ENCODE measurements at regions of chr2 and their contacts with region 1.

Region 1: GRCh38 chr2:219498280-219499057 is at the start of gene GMPPA:
- DNase-seq: peak; percentile 98 to 99
- H3K4me3 ChIP-seq: peak within 1 kb of the TSS; percentile 86
- H3K4me3 Mint-ChIP-seq: peak within 1 kb of the TSS; percentile 98
- H3K27ac Mint-ChIP-seq: peak within 1 kb of the TSS; percentile 94
- H3K4me1 ChIP-seq: peaks cover 14% of the 10 kb centered on the region; the same call in 1 of the 2 replicates
- H3K4me1 Mint-ChIP-seq: peaks cover 16% of the 10 kb centered on the region
- H3K27me3 ChIP-seq: no peaks in the 10 kb centered on the region
- H3K27me3 Mint-ChIP-seq: peaks cover under 1% of the 10 kb centered on the region
- CTCF ChIP-seq: no peak
- total RNA-seq, gene GMPPA: 51.0 and 53.7 TPM in 2 replicates

Region 2: DNA sequence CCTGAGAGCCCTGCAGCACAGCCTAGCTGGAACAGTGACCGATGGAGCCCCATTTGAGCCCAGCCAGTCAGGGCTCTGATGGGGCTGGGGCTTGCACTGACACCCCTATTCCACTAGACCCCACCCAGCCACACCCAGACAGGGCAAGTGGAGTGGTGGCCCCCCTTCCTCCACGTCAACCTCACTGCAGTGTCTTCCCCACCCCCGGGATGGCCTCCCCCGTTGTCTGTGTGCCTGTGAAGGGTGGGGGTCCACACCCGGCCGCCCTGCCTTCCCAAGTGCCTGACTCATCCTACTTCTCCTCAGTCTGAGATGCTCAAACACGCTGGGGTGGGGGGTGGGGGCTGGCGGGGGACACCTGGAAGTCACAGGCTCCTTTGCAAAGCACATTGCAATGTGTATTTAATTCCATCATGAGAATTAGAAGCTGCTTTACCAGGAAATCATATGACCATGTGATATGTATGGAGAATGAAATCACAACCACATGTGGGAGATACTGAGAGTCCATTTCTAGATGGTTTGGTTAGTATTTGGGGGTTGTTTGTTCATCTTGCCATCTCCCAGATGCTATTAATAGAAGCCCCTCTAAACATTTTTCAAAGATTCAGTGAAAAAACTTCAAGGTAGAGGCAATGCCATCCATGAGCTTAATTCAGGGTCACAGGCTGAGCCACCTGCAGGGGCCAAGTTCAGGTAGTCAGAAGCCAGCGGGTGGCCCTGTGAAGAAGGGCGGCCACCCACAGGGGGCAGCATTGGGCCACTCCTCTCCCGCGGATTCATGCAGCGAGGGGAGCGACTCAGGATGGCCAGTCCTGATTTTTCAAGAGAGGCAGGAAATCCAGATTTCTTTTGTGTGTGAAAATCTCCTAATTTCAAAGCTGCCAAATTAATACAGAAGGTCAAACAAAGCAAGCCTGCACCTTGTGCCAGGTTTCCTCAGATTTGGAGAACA is 22.5 kb before region 1 on chr2:
- CTCF ChIA-PET with region 1: interaction called, 15 read pairs
- POLR2A ChIA-PET with region 1: interaction called, 3 read pairs
- intact Hi-C with region 1: no loop called
- DNase-seq: peak; percentile 74 to 87
- H3K4me3 ChIP-seq: no peak overlapping the region
- H3K4me3 Mint-ChIP-seq: peak overlapping the region; percentile 10
- H3K27ac Mint-ChIP-seq: no peak overlapping the region
- H3K4me1 ChIP-seq: no peaks in the 10 kb centered on the region
- H3K4me1 Mint-ChIP-seq: no peaks in the 10 kb centered on the region
- H3K27me3 ChIP-seq: no peaks in the 10 kb centered on the region
- H3K27me3 Mint-ChIP-seq: no peaks in the 10 kb centered on the region
- CTCF ChIP-seq: peak; percentile 91 to 94

Region 3: DNA sequence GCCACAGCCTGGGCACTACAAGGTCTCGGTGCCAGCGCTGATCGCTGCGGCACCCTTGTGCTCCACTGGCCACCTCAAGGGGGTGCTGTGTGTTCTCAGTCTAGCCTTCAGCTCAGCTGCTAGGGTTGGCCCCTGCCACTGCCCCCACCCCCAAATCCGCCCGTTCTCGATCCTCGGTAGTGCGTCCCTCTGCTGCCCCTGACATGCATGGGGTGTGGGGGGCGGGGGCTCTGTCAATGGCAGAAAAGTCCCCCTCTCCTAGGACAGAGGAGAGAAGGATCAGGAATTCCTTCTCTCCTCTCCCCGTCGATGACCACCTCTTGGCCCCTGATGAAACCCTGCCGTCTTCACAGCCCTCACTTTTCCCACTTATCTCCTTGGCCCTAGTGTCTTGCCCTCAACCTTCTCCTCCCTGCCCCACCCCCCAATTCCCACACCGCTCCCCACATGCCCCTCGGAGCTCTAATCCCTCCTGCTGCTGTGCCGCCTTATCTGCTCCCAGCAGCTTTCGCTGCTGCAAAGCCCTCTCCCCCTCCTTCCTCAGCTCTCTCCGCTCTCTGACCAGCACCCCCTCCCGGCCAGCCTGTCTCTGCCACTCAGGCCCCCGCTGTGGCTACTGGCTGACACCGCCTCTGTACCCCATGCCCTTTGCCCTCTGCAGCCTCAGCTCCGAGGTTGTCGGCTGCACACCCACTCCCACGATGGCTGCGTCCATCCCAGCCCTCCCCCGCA is 11.5 kb after region 1 on chr2:
- CTCF ChIA-PET with region 1: interaction called, 126 read pairs
- POLR2A ChIA-PET with region 1: interaction called, 10 read pairs
- intact Hi-C with region 1: loop called (anchors 1 kb)
- DNase-seq: peak; percentile 80 to 81
- H3K4me3 ChIP-seq: peak overlapping the region; percentile 64
- H3K4me3 Mint-ChIP-seq: peak overlapping the region; percentile 80
- H3K27ac Mint-ChIP-seq: no peak overlapping the region
- H3K4me1 ChIP-seq: peaks cover 12% of the 10 kb centered on the region
- H3K4me1 Mint-ChIP-seq: peaks cover 18% of the 10 kb centered on the region
- H3K27me3 ChIP-seq: peaks cover 5% of the 10 kb centered on the region; the same call in 1 of the 2 replicates
- H3K27me3 Mint-ChIP-seq: peaks cover 20% of the 10 kb centered on the region
- CTCF ChIP-seq: peak; percentile 68 to 90

Region 4: DNA sequence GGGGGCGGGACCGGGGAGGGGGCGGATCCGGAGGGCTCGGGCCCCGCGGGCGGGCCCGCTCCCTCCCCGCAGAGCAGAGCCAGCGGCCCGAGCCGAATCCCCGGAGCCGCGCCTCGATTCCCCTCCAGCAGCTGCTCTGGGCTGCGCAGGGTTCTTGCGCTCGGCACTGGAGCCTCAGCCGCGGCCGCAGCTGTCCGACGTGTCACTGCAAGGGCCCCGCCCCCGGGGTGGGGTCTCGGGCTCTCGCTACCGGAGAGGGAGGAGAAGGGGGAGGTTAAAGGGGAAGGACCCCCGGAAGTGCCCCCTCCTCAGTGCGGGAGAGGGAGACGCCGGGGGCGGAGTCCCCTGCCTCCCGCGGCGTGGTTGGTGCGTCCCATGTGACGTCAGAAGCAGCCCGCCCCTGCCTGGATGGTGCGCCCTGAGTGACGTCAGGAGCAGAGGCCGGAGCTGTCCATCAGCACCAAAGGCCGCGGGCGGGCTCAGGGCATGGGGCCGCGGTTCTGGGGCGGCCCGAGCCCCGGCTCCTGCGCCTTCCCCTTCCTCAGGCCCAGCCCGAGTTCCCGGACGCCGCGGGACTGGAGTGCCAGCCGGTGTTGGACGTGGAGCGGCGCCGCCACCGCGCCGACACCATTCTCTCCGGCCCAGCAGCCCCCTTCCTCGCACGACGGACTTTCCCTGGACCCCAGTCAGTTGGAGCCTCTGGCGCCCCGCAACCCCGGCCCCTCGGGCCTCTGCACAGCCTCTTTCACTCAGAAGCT is 45.3 kb after region 1 on chr2 and contains the starts of genes CHPF and TMEM198:
- CTCF ChIA-PET with region 1: interaction called, 19 read pairs
- POLR2A ChIA-PET with region 1: interaction called, 8 read pairs
- intact Hi-C with region 1: no loop called
- DNase-seq: peak; percentile 99
- H3K4me3 ChIP-seq: peak within 1 kb of the TSS; percentile 92
- H3K4me3 Mint-ChIP-seq: peak within 1 kb of the TSS; percentile 92
- H3K27ac Mint-ChIP-seq: peak within 1 kb of the TSS; percentile 87
- H3K4me1 ChIP-seq: peaks cover 19% of the 10 kb centered on the region
- H3K4me1 Mint-ChIP-seq: peaks cover 7% of the 10 kb centered on the region
- H3K27me3 ChIP-seq: no peaks in the 10 kb centered on the region
- H3K27me3 Mint-ChIP-seq: no peaks in the 10 kb centered on the region
- CTCF ChIP-seq: no peak
- total RNA-seq, gene CHPF: 26.4 and 27.3 TPM in 2 replicates
- total RNA-seq, gene TMEM198: 8.5 and 9.1 TPM in 2 replicates